ENCODE measurements at regions of chr6 and their contacts with region 1.

Region 1: DNA sequence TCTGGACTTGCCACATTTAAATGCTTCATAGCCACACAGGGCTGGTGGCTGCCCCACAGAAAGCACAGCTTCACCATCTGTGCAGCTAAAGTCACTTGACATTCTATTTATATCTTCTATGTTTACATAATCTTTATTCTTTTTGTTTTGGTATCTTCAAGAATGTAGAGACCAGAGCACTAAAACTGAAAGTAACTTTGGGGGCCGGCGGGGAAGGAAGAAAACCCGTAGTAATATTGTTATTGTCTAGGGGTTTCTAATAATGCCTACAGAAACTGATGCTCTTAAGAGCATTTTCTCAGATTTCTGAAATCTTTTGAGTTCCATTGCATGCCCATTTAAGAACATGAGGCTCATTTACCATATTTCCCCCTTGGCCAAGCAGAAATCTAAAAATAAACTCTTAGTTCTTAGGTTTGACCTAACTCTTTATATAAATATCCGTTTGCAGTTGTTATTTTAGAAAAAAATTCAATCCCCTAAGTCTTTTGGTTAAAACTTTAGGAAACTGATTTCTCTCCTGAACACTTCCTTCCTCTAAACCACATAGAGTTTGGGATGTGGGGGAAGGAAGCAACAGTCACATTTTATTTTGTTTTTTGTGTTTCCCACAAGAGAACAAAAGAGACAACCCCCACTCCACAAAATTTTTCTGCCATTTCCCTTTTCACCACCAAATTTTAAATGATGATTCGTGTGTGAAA is 207.6 kb downstream of the OGFRL1 start:
- DNase-seq: no peak
- H3K4me3 ChIP-seq: no peak overlapping the region
- CTCF ChIP-seq: no peak
- POLR2A ChIP-seq: no peak

Region 2: GRCh38 chr6:70196531-70196930 is 1299.6 kb before region 1 on chr6:
- intact Hi-C with region 1: loop called (anchors 10 kb)
- DNase-seq: no peak
- H3K4me3 ChIP-seq: no peak overlapping the region
- CTCF ChIP-seq: no peak
- POLR2A ChIP-seq: no peak

Region 3: GRCh38 chr6:71551798-71552197 is 55.6 kb after region 1 on chr6:
- intact Hi-C with region 1: no loop called
- DNase-seq: no peak
- H3K4me3 ChIP-seq: no peak overlapping the region
- CTCF ChIP-seq: no peak
- POLR2A ChIP-seq: no peak

Measured in lower leg skin (tissue), 4 donors.